ENCODE measurements at regions of chr19 and their contacts with region 1.

Region 1: GRCh38 chr19:48872182-48872883 is at the start of gene PPP1R15A:
- DNase-seq: peak; percentile 97 to 99 (median 98)
- H3K4me3 ChIP-seq: peak within 1 kb of the TSS; percentile 52 to 99
- H3K4me3 Mint-ChIP-seq: peak within 1 kb of the TSS; percentile 95 to 100 (median 99)
- H3K27ac ChIP-seq: peak within 1 kb of the TSS; percentile 100
- H3K27ac Mint-ChIP-seq: peak within 1 kb of the TSS; percentile 99 to 100 (median 100)
- H3K4me1 ChIP-seq: peaks cover 34% of the 10 kb centered on the region
- H3K4me1 Mint-ChIP-seq: peaks cover 27 to 48% (median 34%) of the 10 kb centered on the region in 4 donors
- H3K27me3 ChIP-seq: no peaks in the 10 kb centered on the region
- H3K27me3 Mint-ChIP-seq: peaks cover 0 to 6% of the 10 kb centered on the region in 2 donors
- total RNA-seq, gene PPP1R15A: 67.0 to 69.8 TPM

Region 2: DNA sequence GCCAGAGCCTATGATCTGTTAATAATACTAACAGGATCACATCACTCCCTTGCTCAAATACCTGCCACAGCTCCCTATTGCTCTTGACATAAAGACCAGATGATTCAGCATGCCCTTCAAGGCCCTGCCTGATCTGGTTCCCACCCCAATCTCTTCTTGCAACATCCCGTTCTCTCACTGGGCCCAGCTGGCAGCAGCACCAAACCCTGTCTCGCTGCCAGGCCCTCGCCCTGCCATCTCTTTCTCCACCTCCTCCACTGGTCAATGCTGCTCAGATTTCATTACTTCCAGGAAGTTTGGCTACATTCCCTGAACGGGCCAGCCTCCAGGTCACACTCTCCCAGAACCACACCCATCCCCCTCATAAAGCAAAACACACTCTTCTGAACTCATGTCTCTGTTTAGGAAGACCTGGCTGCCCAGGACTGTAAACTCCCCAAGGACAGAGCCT is 52.9 kb before region 1 on chr19:
- CTCF ChIA-PET with region 1: no interaction called
- POLR2A ChIA-PET with region 1: no interaction called
- intact Hi-C with region 1: no loop called
- DNase-seq: no peak
- H3K4me3 ChIP-seq: no peak overlapping the region
- H3K4me3 Mint-ChIP-seq: no peak overlapping the region
- H3K27ac ChIP-seq: no peak overlapping the region
- H3K27ac Mint-ChIP-seq: peak overlapping the region in 2 of 7 donors; percentile 64 to 85
- H3K4me1 ChIP-seq: no peaks in the 10 kb centered on the region
- H3K4me1 Mint-ChIP-seq: peaks cover 2 to 13% (median 9%) of the 10 kb centered on the region in 4 donors
- H3K27me3 ChIP-seq: no peaks in the 10 kb centered on the region
- H3K27me3 Mint-ChIP-seq: no peaks in the 10 kb centered on the region

Region 3: GRCh38 chr19:48858984-48859710 is 13.2 kb before region 1 on chr19:
- CTCF ChIA-PET with region 1: no interaction called
- POLR2A ChIA-PET with region 1: interaction called, 13 read pairs
- intact Hi-C with region 1: loop called (anchors 1 kb)
- DNase-seq: peak; percentile 72 to 82 (median 75)
- H3K4me3 ChIP-seq: peak overlapping the region; percentile 45 to 55
- H3K4me3 Mint-ChIP-seq: peak overlapping the region; percentile 90 to 99 (median 94)
- H3K27ac ChIP-seq: peak overlapping the region; percentile 35
- H3K27ac Mint-ChIP-seq: peak overlapping the region; percentile 75 to 98 (median 93)
- H3K4me1 ChIP-seq: peaks cover 14% of the 10 kb centered on the region
- H3K4me1 Mint-ChIP-seq: peaks cover 2 to 10% (median 6%) of the 10 kb centered on the region in 4 donors
- H3K27me3 ChIP-seq: no peaks in the 10 kb centered on the region
- H3K27me3 Mint-ChIP-seq: no peaks in the 10 kb centered on the region

Region 4: GRCh38 chr19:48933382-48933932 is 61.1 kb after region 1 on chr19 and contains the start of gene DHDH:
- CTCF ChIA-PET with region 1: no interaction called
- POLR2A ChIA-PET with region 1: interaction called, 8 read pairs
- intact Hi-C with region 1: loop called (anchors 2 kb)
- DNase-seq: peak; percentile 86 to 92 (median 87)
- H3K4me3 ChIP-seq: peak within 1 kb of the TSS; percentile 39 to 54
- H3K4me3 Mint-ChIP-seq: peak within 1 kb of the TSS; percentile 77 to 92 (median 88)
- H3K27ac ChIP-seq: peak within 1 kb of the TSS; percentile 23
- H3K27ac Mint-ChIP-seq: peak within 1 kb of the TSS in 6 of 7 donors; percentile 49 to 93 (median 90)
- H3K4me1 ChIP-seq: peaks cover 6% of the 10 kb centered on the region
- H3K4me1 Mint-ChIP-seq: peaks cover 5 to 17% (median 11%) of the 10 kb centered on the region in 4 donors
- H3K27me3 ChIP-seq: no peaks in the 10 kb centered on the region
- H3K27me3 Mint-ChIP-seq: no peaks in the 10 kb centered on the region
- total RNA-seq, gene DHDH: 1.2 to 1.6 TPM

Region 5: GRCh38 chr19:48959917-48960239 is 87.5 kb after region 1 on chr19:
- CTCF ChIA-PET with region 1: no interaction called
- POLR2A ChIA-PET with region 1: interaction called, 134 read pairs
- intact Hi-C with region 1: loop called (anchors 1 kb)
- DNase-seq: no peak
- H3K4me3 ChIP-seq: no peak overlapping the region
- H3K4me3 Mint-ChIP-seq: no peak overlapping the region
- H3K27ac ChIP-seq: no peak overlapping the region
- H3K27ac Mint-ChIP-seq: peak overlapping the region in 1 of 7 donors; percentile 76
- H3K4me1 ChIP-seq: peaks cover 50% of the 10 kb centered on the region
- H3K4me1 Mint-ChIP-seq: peaks cover 31 to 70% (median 52%) of the 10 kb centered on the region in 4 donors
- H3K27me3 ChIP-seq: no peaks in the 10 kb centered on the region
- H3K27me3 Mint-ChIP-seq: no peaks in the 10 kb centered on the region

Region 6: DNA sequence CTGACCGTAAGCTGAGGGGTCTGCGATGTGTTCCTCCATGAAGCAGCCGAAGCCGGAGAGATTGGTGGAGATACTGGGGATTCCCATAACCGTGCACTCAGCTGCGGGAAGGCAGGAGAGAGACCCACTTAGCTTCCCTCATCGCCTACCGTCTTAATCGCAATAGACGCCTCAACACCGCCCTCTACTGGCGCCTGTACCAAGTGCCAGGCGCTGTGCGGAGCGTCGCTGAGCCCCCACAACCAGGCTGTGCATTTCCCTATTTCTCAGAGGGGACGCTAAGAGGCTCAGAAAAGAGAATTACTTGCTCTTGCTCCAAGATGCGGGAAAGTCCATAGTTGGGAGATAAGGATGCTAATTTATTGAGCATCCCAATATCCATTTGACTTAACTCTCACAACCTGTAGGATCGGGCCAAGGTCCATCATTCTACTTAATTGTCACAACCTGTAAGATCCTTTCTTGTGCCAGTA is 98.6 kb after region 1 on chr19:
- CTCF ChIA-PET with region 1: interaction called, 18 read pairs
- POLR2A ChIA-PET with region 1: interaction called, 134 read pairs
- intact Hi-C with region 1: no loop called
- DNase-seq: peak; percentile 67 to 77 (median 68)
- H3K4me3 ChIP-seq: no peak overlapping the region
- H3K4me3 Mint-ChIP-seq: peak overlapping the region in 1 of 8 donors; percentile 6
- H3K27ac ChIP-seq: no peak overlapping the region
- H3K27ac Mint-ChIP-seq: peak overlapping the region in 5 of 7 donors; percentile 27 to 80 (median 64)
- H3K4me1 ChIP-seq: peaks cover 19% of the 10 kb centered on the region
- H3K4me1 Mint-ChIP-seq: peaks cover 8 to 24% (median 17%) of the 10 kb centered on the region in 4 donors
- H3K27me3 ChIP-seq: no peaks in the 10 kb centered on the region
- H3K27me3 Mint-ChIP-seq: no peaks in the 10 kb centered on the region

Measured in CD4-positive, alpha-beta memory T cell (primary cell).